Activated CD4-positive, alpha-beta T cell treated with anti-CD3 and anti-CD28 coated beads, Interleukin-2, amount 10 ng/mL, durations not matched to agents 24 days and 14 days (primary cell): ENCODE measurements at regions of chr12 and their contacts with region 1.

Region 1: GRCh38 chr12:8996682-8997360 is 7.5 kb downstream of the KLRG1 start:
- DNase-seq: peak; percentile 70
- H3K4me3 Mint-ChIP-seq: no peak overlapping the region
- H3K27ac Mint-ChIP-seq: no peak overlapping the region
- H3K4me1 Mint-ChIP-seq: peaks cover 15% of the 10 kb centered on the region
- H3K27me3 Mint-ChIP-seq: peaks cover 18% of the 10 kb centered on the region

Region 2: DNA sequence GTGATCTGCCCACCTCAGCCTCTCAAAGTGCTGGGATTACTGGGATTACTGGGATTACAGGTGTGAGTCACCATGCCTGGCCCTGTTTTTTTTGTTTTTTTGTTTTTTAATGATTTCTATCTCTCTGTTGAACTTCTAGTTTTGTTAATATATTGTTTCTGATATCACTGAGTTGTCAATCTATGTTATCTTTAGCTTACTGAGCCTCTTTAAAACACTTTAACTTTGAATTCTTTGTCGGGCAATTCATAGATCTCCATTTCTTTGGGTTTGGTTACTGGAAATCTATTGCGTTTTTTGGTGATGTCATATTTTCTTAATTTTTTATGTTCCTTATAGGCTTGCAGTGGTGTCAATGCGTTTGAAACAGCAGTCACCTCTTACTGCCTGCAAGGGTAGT is 16.7 kb before region 1 on chr12:
- intact Hi-C with region 1: no loop called
- DNase-seq: no peak
- H3K4me3 Mint-ChIP-seq: no peak overlapping the region
- H3K27ac Mint-ChIP-seq: no peak overlapping the region
- H3K4me1 Mint-ChIP-seq: no peaks in the 10 kb centered on the region
- H3K27me3 Mint-ChIP-seq: peaks cover 1% of the 10 kb centered on the region

Region 3: GRCh38 chr12:9039397-9039977 is 42.7 kb after region 1 on chr12:
- intact Hi-C with region 1: loop called (anchors 1 kb)
- DNase-seq: peak; percentile 76
- H3K4me3 Mint-ChIP-seq: no peak overlapping the region
- H3K27ac Mint-ChIP-seq: no peak overlapping the region
- H3K4me1 Mint-ChIP-seq: peaks cover 19% of the 10 kb centered on the region
- H3K27me3 Mint-ChIP-seq: peaks cover 12% of the 10 kb centered on the region